ENCODE measurements at regions of chr17 and their contacts with region 1.

Region 1: GRCh38 chr17:38485146-38485468 is 56.8 kb downstream of the ARHGAP23 start:
- DNase-seq: no peak
- ATAC-seq: no peak

Region 2: DNA sequence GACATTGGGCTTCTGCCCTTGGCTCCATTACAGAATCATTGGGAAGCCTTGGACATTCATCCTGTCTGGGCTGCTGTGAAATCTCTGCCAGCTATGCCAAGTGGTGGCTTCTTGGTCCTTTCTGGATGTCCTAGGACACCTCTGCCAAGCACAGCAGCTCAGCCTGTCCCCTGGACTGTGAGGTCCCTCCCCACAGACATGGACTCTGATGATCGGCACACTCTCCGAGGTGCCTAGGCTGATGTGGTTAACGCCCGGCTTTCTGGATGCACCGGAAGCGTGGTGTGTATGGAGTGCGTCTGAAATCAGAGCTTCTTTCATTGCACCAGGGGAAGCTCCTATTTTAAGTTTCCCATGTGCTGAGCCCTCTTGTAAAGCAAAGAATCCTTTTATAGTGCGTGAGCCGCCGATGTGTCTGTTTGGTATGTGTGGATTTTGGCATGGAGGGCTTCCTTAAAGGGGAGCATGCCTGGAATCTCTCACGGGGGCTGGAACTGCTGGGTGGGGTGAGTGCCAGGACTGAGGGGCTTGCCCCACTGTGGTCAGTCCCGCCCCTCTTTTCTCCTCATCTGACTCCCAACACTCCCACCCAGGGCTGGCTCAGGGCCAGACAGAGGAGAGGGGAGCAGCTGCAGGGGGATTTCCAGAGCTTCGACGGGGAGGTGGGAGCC is 63.8 kb before region 1 on chr17:
- intact Hi-C with region 1: loop called (anchors 5 kb)
- DNase-seq: no peak
- ATAC-seq: peak; percentile 5

Region 3: DNA sequence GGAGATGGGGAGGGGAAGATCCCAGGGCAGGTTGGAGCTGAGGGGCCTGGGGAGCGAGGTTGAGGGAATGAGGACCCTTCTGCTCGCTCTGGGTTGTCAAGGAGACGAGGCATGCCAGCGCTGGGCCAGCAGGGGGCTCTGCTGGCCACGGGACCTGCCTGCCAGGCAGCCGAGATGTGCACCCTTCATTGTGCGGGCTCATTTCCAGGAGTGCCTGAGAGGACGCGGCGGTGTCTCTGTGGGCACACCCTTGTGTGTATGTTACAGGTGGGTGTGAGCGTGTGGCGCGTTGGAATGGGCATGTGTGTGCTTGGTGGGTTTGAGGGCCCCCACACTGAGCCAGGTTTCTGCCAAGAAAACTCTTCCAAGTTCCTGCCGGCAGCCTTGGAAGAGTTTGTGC is 41.0 kb before region 1 on chr17:
- intact Hi-C with region 1: loop called (anchors 5 kb)
- DNase-seq: no peak
- ATAC-seq: peak; percentile 56

Measured in Right ventricle myocardium inferior (tissue), 1 donor.